Left ventricle myocardium superior (tissue), 1 donor: ENCODE measurements at regions of chr10 and their contacts with region 1.

Region 1: GRCh38 chr10:86585037-86585725 is 63.6 kb upstream of the WAPL start:
- DNase-seq: peak; percentile 74
- ATAC-seq: peak; percentile 94

Region 2: DNA sequence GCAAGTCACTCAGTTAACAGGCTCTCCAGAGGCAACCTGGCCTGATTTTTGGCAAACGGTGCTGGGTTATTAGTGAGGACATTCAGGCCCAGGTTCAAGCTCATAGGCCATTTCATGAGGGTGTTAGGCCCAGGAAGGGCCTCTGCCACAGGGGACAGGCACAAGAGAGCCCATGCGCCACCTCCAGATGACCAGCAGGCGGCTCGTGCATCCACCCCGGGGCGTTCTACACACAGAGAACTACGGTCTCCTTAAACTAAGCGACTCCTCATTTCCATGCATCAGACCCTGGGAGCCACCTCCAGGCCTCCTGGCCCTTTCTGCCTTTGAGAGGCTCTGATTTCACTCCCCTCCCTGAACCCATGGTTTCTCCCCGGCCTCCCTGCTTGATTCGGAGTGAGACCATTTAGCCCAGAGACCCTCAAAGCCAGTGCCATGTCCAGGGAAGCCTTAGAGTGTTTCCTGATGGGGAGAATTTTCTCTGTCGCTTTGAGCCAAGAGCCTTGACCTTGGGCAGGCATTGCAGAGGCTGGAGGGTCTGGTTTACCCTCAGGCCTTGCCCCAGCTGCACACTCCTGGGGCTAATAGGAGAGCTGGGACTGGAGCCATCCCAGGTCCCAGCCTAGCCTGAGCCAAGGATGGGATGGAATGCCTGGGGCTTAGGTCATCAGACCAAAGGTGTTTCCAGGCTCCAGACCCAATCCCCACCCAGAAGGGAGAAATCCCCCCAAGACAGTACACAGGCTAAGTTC is 406.6 kb before region 1 on chr10:
- intact Hi-C with region 1: no loop called
- DNase-seq: no peak
- ATAC-seq: no peak

Region 3: DNA sequence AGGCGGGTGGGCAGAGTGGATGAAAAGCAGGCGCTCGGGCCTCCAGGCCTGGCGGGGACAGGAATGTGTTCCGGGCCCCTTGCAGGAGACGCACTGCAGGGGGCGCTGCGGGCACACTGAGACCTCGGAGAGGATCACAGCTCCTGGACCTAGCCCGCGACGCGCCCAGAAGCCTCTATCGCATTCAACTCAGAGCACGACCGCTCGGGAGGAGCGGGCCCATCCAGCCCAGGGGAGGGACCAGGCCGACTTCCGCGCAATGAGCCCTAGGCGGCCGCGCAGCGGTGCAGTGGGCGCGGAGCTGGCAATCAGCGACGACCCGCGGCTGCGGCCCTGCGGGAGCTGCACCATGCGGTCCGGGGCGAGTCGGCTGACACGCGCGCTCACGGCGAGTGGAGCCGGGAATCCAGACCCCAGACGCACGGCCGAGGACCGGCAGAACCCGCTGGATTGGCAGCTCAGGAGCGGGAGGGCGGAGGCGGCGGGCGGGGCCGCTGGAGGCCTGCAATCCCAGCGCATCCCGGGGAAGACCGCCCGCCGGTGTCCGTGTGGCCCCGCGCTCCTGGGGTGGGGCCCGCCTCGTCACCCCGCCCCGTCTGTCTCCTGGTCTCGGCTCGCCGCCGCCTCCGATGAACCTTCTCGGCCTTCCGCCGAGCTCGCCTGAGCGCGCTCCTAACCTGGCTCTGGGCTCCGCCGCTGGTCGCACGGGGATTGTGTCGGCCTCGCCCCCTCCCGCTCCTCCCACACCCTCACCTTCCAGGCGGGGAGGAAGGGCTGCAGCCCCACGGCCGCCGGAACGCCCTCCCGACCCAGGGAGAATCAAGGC is 185.1 kb before region 1 on chr10:
- intact Hi-C with region 1: loop called (anchors 10 kb)
- DNase-seq: peak; percentile 97
- ATAC-seq: peak; percentile 95

Region 4: GRCh38 chr10:86733260-86733671 is 148.1 kb after region 1 on chr10:
- intact Hi-C with region 1: no loop called
- DNase-seq: no peak
- ATAC-seq: peak; percentile 58